Common myeloid progenitor, CD34-positive (primary cell): ENCODE measurements at regions of chr2 and their contacts with region 1.

Region 1: GRCh38 chr2:163182764-163183354 is 344.3 kb upstream of the KCNH7 start:
- DNase-seq: peak; percentile 6 to 33 (median 33)
- H3K4me3 ChIP-seq: no peak overlapping the region
- H3K27ac ChIP-seq: no peak overlapping the region
- H3K4me1 ChIP-seq: no peaks in the 10 kb centered on the region
- H3K27me3 ChIP-seq: no peaks in the 10 kb centered on the region

Region 2: DNA sequence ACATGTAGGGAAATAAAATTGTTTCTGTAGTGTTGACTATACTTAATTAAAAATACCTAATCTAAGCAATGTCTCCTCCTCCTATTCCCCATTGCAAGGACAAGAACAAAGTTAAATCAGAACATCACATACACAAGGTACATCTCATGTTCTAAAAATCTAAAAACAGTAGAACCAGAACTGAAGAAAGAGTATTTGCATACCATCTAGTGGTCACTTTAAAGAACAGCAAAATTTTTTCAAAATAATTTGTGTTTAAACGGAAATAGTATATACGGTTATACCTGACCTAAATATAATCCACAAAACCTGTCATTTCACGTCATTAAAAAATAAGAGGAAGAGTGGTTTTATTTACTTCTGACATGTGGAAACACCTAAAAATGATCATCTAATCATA is 50.0 kb before region 1 on chr2:
- CTCF ChIA-PET with region 1: no interaction called
- POLR2A ChIA-PET with region 1: no interaction called
- DNase-seq: peak in 2 of 3 donors; percentile 1 to 11
- H3K4me3 ChIP-seq: no peak overlapping the region
- H3K27ac ChIP-seq: no peak overlapping the region
- H3K4me1 ChIP-seq: no peaks in the 10 kb centered on the region
- H3K27me3 ChIP-seq: no peaks in the 10 kb centered on the region

Region 3: GRCh38 chr2:163171786-163172531 is 10.9 kb before region 1 on chr2:
- CTCF ChIA-PET with region 1: interaction called, 32 read pairs
- POLR2A ChIA-PET with region 1: no interaction called
- DNase-seq: no peak
- H3K4me3 ChIP-seq: no peak overlapping the region
- H3K27ac ChIP-seq: no peak overlapping the region
- H3K4me1 ChIP-seq: no peaks in the 10 kb centered on the region
- H3K27me3 ChIP-seq: no peaks in the 10 kb centered on the region

Region 4: GRCh38 chr2:164479460-164479859 is 1296.6 kb after region 1 on chr2:
- CTCF ChIA-PET with region 1: interaction called, 16 read pairs
- POLR2A ChIA-PET with region 1: no interaction called
- DNase-seq: peak; percentile 65 to 78 (median 75)
- H3K4me3 ChIP-seq: no peak overlapping the region
- H3K27ac ChIP-seq: no peak overlapping the region
- H3K4me1 ChIP-seq: peaks cover 0 to 6% (median 1%) of the 10 kb centered on the region in 4 experiments
- H3K27me3 ChIP-seq: no peaks in the 10 kb centered on the region